ENCODE measurements at regions of chr13 and their contacts with region 1.

Region 1: GRCh38 chr13:77565635-77566034 is 30.1 kb downstream of the SCEL start:
- DNase-seq: no peak
- H3K4me3 Mint-ChIP-seq: no peak overlapping the region
- H3K27ac Mint-ChIP-seq: no peak overlapping the region
- H3K4me1 Mint-ChIP-seq: no peaks in the 10 kb centered on the region
- H3K27me3 Mint-ChIP-seq: no peaks in the 10 kb centered on the region

Region 2: DNA sequence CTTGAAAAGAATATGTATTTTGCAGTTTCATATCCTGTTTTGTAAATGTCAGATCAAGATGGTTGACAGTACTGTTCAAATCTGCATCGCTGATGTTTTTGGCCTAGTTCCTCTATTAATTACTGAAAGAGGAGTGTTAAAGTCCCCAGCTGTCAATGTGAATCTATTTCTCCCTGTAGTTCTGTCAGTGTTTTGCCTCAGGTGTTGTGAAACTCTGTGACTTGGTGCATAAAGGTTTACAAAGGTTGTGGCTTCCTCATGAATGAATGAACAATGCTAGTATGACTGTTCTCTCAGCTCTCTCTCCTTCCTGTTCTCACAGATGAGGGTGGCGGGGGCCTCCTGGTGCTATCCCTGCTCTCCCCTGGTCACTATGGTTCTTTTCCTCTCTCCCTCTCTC is 381.2 kb before region 1 on chr13:
- CTCF ChIA-PET with region 1: no interaction called
- intact Hi-C with region 1: loop called (anchors 10 kb)
- DNase-seq: peak; percentile 76
- H3K4me3 Mint-ChIP-seq: no peak overlapping the region
- H3K27ac Mint-ChIP-seq: peak overlapping the region; percentile 20
- H3K4me1 Mint-ChIP-seq: peaks cover 16% of the 10 kb centered on the region
- H3K27me3 Mint-ChIP-seq: no peaks in the 10 kb centered on the region

Region 3: GRCh38 chr13:77492982-77493381 is 72.7 kb before region 1 on chr13:
- CTCF ChIA-PET with region 1: interaction called, 23 read pairs
- intact Hi-C with region 1: loop called (anchors 1 kb)
- DNase-seq: peak; percentile 25
- H3K4me3 Mint-ChIP-seq: no peak overlapping the region
- H3K27ac Mint-ChIP-seq: no peak overlapping the region
- H3K4me1 Mint-ChIP-seq: no peaks in the 10 kb centered on the region
- H3K27me3 Mint-ChIP-seq: peaks cover 2% of the 10 kb centered on the region

Region 4: DNA sequence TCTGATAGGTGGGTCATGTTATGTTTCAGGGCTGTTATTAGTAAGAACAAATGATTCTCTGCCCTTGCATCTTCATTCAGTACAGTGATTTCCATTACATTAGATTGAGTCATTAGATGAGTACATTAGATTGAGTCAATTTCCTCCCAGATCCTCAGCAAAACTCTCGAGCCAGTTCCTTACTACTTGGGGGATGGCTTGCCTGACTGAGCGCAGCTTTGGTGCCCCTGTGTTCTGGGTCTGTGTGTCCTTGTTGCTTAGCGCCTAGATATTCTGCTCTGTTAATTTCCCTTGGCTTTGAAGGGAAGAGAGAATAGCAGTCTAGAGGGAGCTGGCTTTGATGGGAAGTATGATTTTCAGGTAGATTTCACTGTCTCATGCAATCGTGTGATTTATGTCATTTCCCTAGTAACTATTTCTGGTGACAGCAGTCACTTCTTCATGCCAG is 49.3 kb before region 1 on chr13:
- CTCF ChIA-PET with region 1: no interaction called
- intact Hi-C with region 1: loop called (anchors 2 kb)
- DNase-seq: peak; percentile 15
- H3K4me3 Mint-ChIP-seq: no peak overlapping the region
- H3K27ac Mint-ChIP-seq: peak overlapping the region; percentile 19
- H3K4me1 Mint-ChIP-seq: peaks cover 13% of the 10 kb centered on the region
- H3K27me3 Mint-ChIP-seq: no peaks in the 10 kb centered on the region

Measured in activated naive CD4-positive, alpha-beta T cell treated with anti-CD3 and anti-CD28 coated beads for 36 hours (primary cell).